ENCODE measurements at regions of chr11 and their contacts with region 1.

Region 1: GRCh38 chr11:132099692-132100091 is 729.3 kb downstream of the NTM start:
- DNase-seq: peak; percentile 5 to 55 (median 52)
- H3K4me3 ChIP-seq: no peak overlapping the region
- H3K4me3 Mint-ChIP-seq: peak overlapping the region in 1 of 2 donors; percentile 61
- H3K27ac ChIP-seq: no peak overlapping the region
- H3K27ac Mint-ChIP-seq: peak overlapping the region in 5 of 7 donors; percentile 56 to 84 (median 71)
- H3K4me1 ChIP-seq: peaks cover 0 to 25% of the 10 kb centered on the region in 2 donors
- H3K4me1 Mint-ChIP-seq: peaks cover 13% of the 10 kb centered on the region
- H3K27me3 ChIP-seq: no peaks in the 10 kb centered on the region
- H3K27me3 Mint-ChIP-seq: peaks cover 0 to 2% (median 0%) of the 10 kb centered on the region in 3 donors
- CTCF ChIP-seq: peak; percentile 70

Region 2: DNA sequence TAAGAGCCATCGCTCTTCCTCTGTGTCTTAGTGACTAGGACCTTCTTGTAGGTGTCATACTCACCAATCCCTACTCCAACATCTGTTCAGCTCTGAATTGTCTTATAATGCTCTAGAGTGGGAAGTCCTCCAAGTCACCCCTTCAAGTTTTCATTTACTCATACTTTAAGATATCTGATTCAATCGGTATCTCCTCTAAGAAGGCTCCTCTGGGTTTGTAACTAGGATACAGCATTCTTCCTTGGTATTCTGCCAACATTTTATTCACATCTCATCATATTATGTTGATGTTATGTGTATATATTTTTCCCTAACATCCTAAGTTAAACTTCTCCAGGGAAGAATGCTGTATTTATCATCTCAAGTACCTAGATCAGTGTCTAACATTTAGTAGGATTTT is 67.1 kb before region 1 on chr11:
- intact Hi-C with region 1: loop called in 1 of 2 experiments (anchors 10 kb)
- DNase-seq: no peak
- H3K4me3 ChIP-seq: no peak overlapping the region
- H3K4me3 Mint-ChIP-seq: no peak overlapping the region
- H3K27ac ChIP-seq: no peak overlapping the region
- H3K27ac Mint-ChIP-seq: no peak overlapping the region
- H3K4me1 ChIP-seq: no peaks in the 10 kb centered on the region
- H3K4me1 Mint-ChIP-seq: peaks cover 10% of the 10 kb centered on the region
- H3K27me3 ChIP-seq: peaks cover 0 to 8% of the 10 kb centered on the region in 2 donors
- H3K27me3 Mint-ChIP-seq: peaks cover 3 to 7% (median 6%) of the 10 kb centered on the region in 3 donors
- CTCF ChIP-seq: no peak

Region 3: DNA sequence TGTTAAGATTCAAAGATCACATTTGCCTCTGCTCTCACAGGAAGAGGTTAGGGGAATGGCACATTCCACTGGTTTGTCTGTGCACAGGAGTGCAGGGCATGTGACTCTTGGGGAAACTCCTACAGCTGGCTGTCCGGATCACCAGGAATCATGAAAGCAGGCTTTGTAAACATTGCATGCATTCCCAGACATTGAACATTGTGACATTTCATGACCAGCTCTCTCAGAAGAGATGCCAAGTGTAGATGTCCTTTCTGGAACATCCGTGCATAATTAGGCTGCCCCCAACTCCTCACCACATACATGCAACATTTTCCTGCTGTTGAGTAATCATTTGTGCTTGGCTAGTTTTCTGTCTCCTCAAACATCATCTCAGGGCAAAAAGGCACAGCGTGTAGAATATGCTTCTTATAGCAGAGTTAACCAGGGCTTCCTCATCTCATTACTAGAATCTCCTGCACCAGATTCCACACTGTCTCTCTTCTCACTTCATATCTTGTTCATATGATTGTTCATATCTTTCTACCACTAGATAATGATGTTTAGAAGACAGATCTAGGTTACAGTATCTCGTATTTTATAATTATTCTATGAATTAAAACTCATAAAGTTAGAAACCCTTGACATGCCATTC is 34.6 kb before region 1 on chr11:
- intact Hi-C with region 1: loop called in 1 of 2 experiments (anchors 5 kb)
- DNase-seq: peak in 1 of 3 donors; percentile 21
- H3K4me3 ChIP-seq: peak overlapping the region in 1 of 3 experiments; percentile 12
- H3K4me3 Mint-ChIP-seq: peak overlapping the region in 1 of 2 donors; percentile 63
- H3K27ac ChIP-seq: no peak overlapping the region
- H3K27ac Mint-ChIP-seq: peak overlapping the region in 4 of 7 donors; percentile 27 to 84 (median 52)
- H3K4me1 ChIP-seq: peaks cover 10 to 31% of the 10 kb centered on the region in 2 donors
- H3K4me1 Mint-ChIP-seq: peaks cover 46% of the 10 kb centered on the region
- H3K27me3 ChIP-seq: no peaks in the 10 kb centered on the region
- H3K27me3 Mint-ChIP-seq: peaks cover 0 to 1% (median 1%) of the 10 kb centered on the region in 3 donors
- CTCF ChIP-seq: no peak

Region 4: DNA sequence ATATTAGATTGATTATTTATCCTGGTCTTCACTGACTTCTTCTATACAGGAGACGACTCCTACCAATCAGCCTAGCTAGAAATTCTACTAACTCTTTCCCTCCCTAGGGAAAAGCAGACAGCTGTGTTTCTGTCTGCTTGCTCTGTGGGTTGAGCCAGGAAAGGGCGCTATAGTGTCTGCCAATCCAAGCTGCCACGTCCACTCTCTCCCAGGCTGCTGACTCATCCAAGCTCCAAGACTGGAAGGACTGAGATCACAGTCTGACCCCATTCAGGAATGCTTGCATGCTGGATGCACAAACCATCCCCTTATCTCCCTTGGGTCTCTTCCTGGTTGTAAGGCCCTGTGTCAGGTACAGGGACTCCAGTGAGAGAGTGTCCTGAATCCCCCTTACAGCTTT is 477.0 kb after region 1 on chr11:
- intact Hi-C with region 1: no loop called
- DNase-seq: no peak
- H3K4me3 ChIP-seq: no peak overlapping the region
- H3K4me3 Mint-ChIP-seq: no peak overlapping the region
- H3K27ac ChIP-seq: no peak overlapping the region
- H3K27ac Mint-ChIP-seq: no peak overlapping the region
- H3K4me1 ChIP-seq: no peaks in the 10 kb centered on the region
- H3K4me1 Mint-ChIP-seq: no peaks in the 10 kb centered on the region
- H3K27me3 ChIP-seq: no peaks in the 10 kb centered on the region
- H3K27me3 Mint-ChIP-seq: peaks cover 0 to 1% (median 0%) of the 10 kb centered on the region in 3 donors
- CTCF ChIP-seq: no peak